CD4-positive, alpha-beta memory T cell (primary cell): ENCODE measurements at regions of chr1 and their contacts with region 1.

Region 1: GRCh38 chr1:15430787-15431570 is 7.3 kb upstream of the CTRC start:
- DNase-seq: peak; percentile 62 to 75 (median 65)
- H3K4me3 ChIP-seq: no peak overlapping the region
- H3K4me3 Mint-ChIP-seq: no peak overlapping the region
- H3K27ac ChIP-seq: no peak overlapping the region
- H3K27ac Mint-ChIP-seq: peak overlapping the region in 5 of 7 donors; percentile 42 to 86 (median 72)
- H3K4me1 ChIP-seq: no peaks in the 10 kb centered on the region
- H3K4me1 Mint-ChIP-seq: peaks cover 0 to 7% (median 0%) of the 10 kb centered on the region in 4 donors
- H3K27me3 ChIP-seq: no peaks in the 10 kb centered on the region
- H3K27me3 Mint-ChIP-seq: no peaks in the 10 kb centered on the region

Region 2: GRCh38 chr1:15323351-15323988 is 107.5 kb before region 1 on chr1:
- CTCF ChIA-PET with region 1: interaction called, 274 read pairs
- POLR2A ChIA-PET with region 1: interaction called, 21 read pairs
- intact Hi-C with region 1: no loop called
- DNase-seq: peak; percentile 66 to 76 (median 67)
- H3K4me3 ChIP-seq: no peak overlapping the region
- H3K4me3 Mint-ChIP-seq: no peak overlapping the region
- H3K27ac ChIP-seq: no peak overlapping the region
- H3K27ac Mint-ChIP-seq: no peak overlapping the region
- H3K4me1 ChIP-seq: peaks cover 5% of the 10 kb centered on the region
- H3K4me1 Mint-ChIP-seq: peaks cover 0 to 6% (median 0%) of the 10 kb centered on the region in 4 donors
- H3K27me3 ChIP-seq: no peaks in the 10 kb centered on the region
- H3K27me3 Mint-ChIP-seq: peaks cover 4 to 7% of the 10 kb centered on the region in 2 donors

Region 3: GRCh38 chr1:15337656-15338402 is 93.2 kb before region 1 on chr1:
- CTCF ChIA-PET with region 1: interaction called, 24 read pairs
- POLR2A ChIA-PET with region 1: no interaction called
- intact Hi-C with region 1: no loop called
- DNase-seq: no peak
- H3K4me3 ChIP-seq: no peak overlapping the region
- H3K4me3 Mint-ChIP-seq: no peak overlapping the region
- H3K27ac ChIP-seq: no peak overlapping the region
- H3K27ac Mint-ChIP-seq: no peak overlapping the region
- H3K4me1 ChIP-seq: peaks cover 16% of the 10 kb centered on the region
- H3K4me1 Mint-ChIP-seq: peaks cover 10 to 18% (median 15%) of the 10 kb centered on the region in 4 donors
- H3K27me3 ChIP-seq: no peaks in the 10 kb centered on the region
- H3K27me3 Mint-ChIP-seq: peaks cover 0 to 12% of the 10 kb centered on the region in 2 donors

Region 4: GRCh38 chr1:15417365-15417934 is 13.5 kb before region 1 on chr1:
- CTCF ChIA-PET with region 1: interaction called, 11 read pairs
- POLR2A ChIA-PET with region 1: interaction called, 9 read pairs
- intact Hi-C with region 1: no loop called
- DNase-seq: peak; percentile 64 to 92 (median 73)
- H3K4me3 ChIP-seq: peak overlapping the region in 1 of 2 donors; percentile 41
- H3K4me3 Mint-ChIP-seq: peak overlapping the region; percentile 7 to 84 (median 74)
- H3K27ac ChIP-seq: peak overlapping the region; percentile 70
- H3K27ac Mint-ChIP-seq: peak overlapping the region; percentile 91 to 98 (median 95)
- H3K4me1 ChIP-seq: peaks cover 76% of the 10 kb centered on the region
- H3K4me1 Mint-ChIP-seq: peaks cover 41 to 78% (median 62%) of the 10 kb centered on the region in 4 donors
- H3K27me3 ChIP-seq: no peaks in the 10 kb centered on the region
- H3K27me3 Mint-ChIP-seq: no peaks in the 10 kb centered on the region